Ovary (tissue), 10 donors: ENCODE measurements at regions of chr6 and their contacts with region 1.

Region 1: DNA sequence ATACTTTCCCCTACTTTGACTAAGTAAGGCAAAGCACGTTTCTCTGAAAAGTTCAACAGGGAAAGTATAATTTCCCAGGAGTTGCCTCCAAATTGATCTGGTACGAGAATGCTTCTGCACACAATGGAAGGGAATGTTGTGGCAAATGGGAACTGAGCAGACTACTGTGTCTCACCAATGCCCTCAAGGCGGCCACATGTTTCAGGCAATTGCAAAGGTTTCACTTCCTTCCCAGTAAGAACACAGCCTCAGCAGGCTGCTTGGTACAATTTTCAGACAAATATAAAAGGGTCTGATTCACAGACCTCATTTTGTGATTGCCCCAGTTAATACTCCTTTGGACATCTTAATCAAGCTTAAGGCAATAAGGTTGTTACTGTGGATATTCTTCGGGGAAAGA is 71.2 kb downstream of the KIAA0319 start:
- DNase-seq: no peak
- H3K4me3 ChIP-seq: no peak overlapping the region
- H3K27ac ChIP-seq: no peak overlapping the region
- H3K4me1 ChIP-seq: no peaks in the 10 kb centered on the region
- H3K27me3 ChIP-seq: no peaks in the 10 kb centered on the region
- CTCF ChIP-seq: no peak
- EP300 ChIP-seq: no peak
- POLR2A ChIP-seq: no peak

Region 2: GRCh38 chr6:24766680-24767462 is 192.1 kb after region 1 on chr6:
- intact Hi-C with region 1: loop called (anchors 5 to 10 kb)
- DNase-seq: no peak
- H3K4me3 ChIP-seq: no peak overlapping the region
- H3K27ac ChIP-seq: no peak overlapping the region
- H3K4me1 ChIP-seq: no peaks in the 10 kb centered on the region
- H3K27me3 ChIP-seq: no peaks in the 10 kb centered on the region
- CTCF ChIP-seq: peak in 2 of 3 donors; percentile 11 to 21
- EP300 ChIP-seq: no peak
- POLR2A ChIP-seq: no peak

Region 3: DNA sequence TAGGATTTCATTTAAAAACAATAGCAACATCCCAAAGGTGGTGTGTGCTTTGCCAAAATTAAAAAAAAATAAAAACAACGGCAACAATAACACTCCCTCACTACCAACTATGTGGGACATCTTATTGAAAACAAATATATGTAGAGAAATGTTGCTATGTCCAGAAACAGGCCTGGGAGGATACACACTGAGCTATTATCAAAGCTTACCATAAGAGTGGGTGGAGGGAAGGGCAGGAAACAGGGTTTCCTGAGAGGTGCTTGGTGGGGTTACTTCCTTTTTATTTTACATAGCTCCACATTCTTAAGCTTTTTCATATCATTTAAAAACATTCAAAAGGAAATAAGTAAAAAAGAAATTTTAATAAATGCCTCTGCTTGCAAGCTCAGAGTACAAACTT is 510.9 kb after region 1 on chr6:
- intact Hi-C with region 1: loop called in 1 of 4 experiments (anchors 10 kb)
- DNase-seq: no peak
- H3K4me3 ChIP-seq: no peak overlapping the region
- H3K27ac ChIP-seq: no peak overlapping the region
- H3K4me1 ChIP-seq: no peaks in the 10 kb centered on the region
- H3K27me3 ChIP-seq: no peaks in the 10 kb centered on the region
- CTCF ChIP-seq: no peak
- EP300 ChIP-seq: no peak
- POLR2A ChIP-seq: no peak